HEK293T (cell line): ENCODE measurements at regions of chr15 and their contacts with region 1.

Region 1: GRCh38 chr15:65869127-65869953 is at the start of gene RAB11A:
- DNase-seq: peak; percentile 95

Region 2: GRCh38 chr15:65610871-65611718 is 258.2 kb before region 1 on chr15 and contains the start of gene INTS14:
- CTCF ChIA-PET with region 1: no interaction called
- POLR2A ChIA-PET with region 1: interaction called, 21 read pairs
- DNase-seq: peak; percentile 97

Region 3: DNA sequence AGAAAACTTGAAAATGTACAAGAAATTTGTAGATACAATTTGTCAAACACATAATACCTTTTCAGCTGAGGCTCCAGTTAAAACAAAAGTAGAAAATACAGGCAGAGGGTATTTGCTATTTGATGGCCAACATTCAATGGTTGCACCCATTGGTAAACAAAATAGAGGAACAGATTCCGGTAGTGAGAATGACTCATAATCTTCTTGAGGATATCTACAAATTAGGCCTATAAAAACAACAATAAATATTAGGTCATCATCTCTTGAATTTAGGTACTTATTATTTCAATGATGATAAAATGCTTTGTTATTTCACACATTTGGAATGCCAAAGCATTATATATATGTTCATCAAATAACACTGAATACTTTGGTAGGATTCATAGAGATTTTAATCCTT is 130.7 kb before region 1 on chr15:
- CTCF ChIA-PET with region 1: no interaction called
- POLR2A ChIA-PET with region 1: no interaction called
- DNase-seq: no peak

Region 4: DNA sequence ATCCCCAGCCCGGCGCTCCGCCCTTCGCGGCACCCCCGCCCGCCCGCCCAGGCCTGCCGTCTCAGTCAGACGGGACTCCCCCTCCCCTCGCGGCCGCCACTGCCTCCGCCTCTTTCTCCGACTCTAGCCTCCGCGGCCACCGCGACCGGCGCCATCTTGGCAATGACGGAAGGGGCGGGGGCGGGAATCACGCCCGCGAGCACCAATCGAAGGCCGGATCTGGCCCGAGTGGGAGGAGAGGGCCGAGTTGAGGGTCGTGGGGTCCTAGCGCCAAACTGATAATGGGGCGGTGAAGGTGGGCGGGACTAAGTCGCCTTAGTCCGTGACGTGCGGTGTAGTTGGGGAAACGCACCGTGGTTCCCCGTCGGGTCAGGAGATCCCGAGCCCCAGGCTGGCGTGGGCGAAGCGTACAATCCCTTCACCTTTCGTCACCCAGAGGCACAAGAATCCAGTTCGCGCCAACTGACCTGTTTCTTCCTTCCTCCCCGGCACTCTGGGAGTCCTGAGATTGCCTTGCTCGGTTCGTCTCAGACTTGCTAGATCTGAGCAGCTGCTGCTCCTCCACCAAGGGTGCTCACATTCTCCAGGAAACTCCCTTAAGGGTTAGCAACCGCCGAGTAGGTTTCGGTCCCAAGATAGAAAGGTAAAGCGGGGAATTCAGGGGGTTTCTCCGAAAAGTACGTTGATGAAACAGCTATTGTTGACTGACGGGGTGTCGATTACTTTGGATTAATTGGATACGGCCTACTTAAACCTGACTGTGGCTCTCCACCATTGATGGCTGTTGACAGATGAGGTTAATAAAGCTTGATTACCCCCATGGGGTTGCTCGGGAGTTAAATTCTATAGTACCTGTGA is 77.0 kb before region 1 on chr15 and contains the start of gene DENND4A:
- CTCF ChIA-PET with region 1: no interaction called
- POLR2A ChIA-PET with region 1: interaction called, 29 read pairs
- DNase-seq: peak; percentile 89

Region 5: DNA sequence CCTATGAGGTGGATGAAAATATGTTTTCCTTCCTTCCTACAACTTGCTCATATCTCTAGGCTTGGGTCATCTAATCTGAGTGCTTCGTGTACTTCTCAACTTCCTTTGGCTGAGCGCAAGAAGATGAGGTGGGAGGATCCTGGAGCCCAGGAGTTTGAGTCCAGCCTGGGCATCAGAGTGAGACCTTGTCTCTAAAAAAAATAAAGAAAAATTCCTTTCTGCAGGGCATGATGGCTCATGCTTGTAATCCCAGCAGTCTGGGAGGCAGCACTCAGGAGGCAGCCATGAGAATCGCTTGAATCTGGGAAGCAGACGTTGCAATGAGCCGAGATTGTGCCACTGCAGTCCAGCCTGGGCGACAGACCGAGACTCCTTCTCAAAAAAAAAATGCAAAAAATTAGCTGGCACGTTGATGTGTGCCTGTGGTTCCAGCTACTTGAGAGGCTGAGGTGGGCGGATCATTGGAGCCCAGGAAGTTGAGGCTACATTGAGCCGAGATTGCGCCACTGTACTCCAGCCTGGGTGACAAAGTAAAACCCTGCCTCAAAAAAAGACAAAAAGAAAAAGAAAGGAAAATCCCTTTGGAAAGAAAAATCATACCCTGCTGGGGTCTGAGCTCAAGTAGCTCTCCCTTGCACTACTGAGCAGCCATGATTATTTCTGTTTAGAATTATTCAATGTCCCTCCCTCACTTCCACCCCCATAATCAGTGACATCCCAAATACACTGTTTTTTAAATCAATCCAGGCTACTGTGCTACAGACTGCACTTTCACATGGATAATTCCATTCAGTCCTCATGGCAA is 28.0 kb before region 1 on chr15:
- CTCF ChIA-PET with region 1: interaction called, 4 read pairs
- POLR2A ChIA-PET with region 1: interaction called, 11 read pairs
- DNase-seq: no peak

Region 6: DNA sequence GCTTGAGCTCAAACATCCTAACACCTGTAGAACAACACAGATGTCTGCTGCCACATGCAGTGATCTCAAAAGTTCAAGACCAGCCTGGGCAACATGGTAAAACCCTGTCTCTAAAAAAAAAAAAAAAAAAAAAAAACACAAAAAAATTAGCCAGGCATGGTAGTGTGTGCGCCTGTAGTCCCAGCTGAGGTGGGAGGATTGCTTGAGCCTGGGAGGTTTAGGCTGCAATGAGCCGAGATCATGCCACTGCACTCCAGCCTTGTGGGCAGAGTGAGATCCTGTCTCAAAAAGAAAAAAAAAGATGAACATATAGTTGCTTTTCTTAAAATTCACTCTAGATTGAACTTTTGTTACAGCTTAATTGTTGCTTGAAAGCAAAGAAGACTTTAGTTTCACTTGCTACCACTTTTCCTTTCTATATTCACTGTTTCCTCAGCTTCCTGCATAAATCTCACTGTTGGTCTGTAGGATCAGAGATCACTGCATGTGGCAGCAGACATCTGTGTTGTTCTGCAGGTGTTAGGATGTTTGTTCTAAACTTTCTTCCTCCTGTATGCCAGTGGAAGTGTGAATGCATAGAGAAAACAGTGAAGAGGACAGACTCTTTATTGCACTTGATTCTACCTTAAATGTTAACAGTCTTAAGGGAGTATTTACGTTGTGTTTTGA is 12.6 kb after region 1 on chr15:
- CTCF ChIA-PET with region 1: interaction called, 3 read pairs
- POLR2A ChIA-PET with region 1: interaction called, 22 read pairs
- DNase-seq: no peak